ENCODE measurements at regions of chr2 and their contacts with region 1.

Region 1: GRCh38 chr2:25276569-25277465 is 64.9 kb downstream of the DNMT3A start:
- DNase-seq: peak; percentile 69 to 79 (median 73)
- H3K4me3 ChIP-seq: peak overlapping the region; percentile 26 to 53
- H3K4me3 Mint-ChIP-seq: peak overlapping the region; percentile 67 to 81 (median 76)
- H3K27ac ChIP-seq: peak overlapping the region; percentile 89
- H3K27ac Mint-ChIP-seq: peak overlapping the region; percentile 93 to 99 (median 96)
- H3K4me1 ChIP-seq: peaks cover 73% of the 10 kb centered on the region
- H3K4me1 Mint-ChIP-seq: peaks cover 37 to 78% (median 61%) of the 10 kb centered on the region in 4 donors
- H3K27me3 ChIP-seq: no peaks in the 10 kb centered on the region
- H3K27me3 Mint-ChIP-seq: no peaks in the 10 kb centered on the region

Region 2: DNA sequence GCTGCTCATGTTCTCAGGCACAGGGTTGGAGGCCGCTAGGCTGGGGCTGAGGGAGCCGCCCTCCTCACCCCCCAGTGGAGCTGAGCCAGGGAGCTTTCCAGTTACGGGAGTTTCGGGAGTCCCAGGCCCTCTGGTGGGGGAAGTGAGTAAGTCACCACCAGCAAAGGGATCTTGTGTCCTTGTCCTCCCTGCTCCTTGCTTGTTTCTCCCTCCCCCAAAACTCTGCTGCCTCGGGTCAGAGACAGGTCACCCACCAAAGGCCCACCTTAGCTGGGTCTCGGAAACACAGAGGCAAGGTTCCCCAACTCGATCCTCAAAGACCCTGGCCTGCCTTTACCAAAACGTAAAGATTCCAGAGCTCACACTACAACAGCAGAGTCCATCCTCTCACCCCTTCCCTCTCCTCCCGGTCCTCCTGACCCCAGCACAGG is 48.0 kb before region 1 on chr2:
- CTCF ChIA-PET with region 1: interaction called, 11 read pairs
- POLR2A ChIA-PET with region 1: interaction called, 4 read pairs
- intact Hi-C with region 1: no loop called
- DNase-seq: no peak
- H3K4me3 ChIP-seq: no peak overlapping the region
- H3K4me3 Mint-ChIP-seq: no peak overlapping the region
- H3K27ac ChIP-seq: no peak overlapping the region
- H3K27ac Mint-ChIP-seq: peak overlapping the region in 2 of 7 donors; percentile 14 to 75
- H3K4me1 ChIP-seq: peaks cover 4% of the 10 kb centered on the region
- H3K4me1 Mint-ChIP-seq: peaks cover 0 to 9% (median 1%) of the 10 kb centered on the region in 4 donors
- H3K27me3 ChIP-seq: no peaks in the 10 kb centered on the region
- H3K27me3 Mint-ChIP-seq: no peaks in the 10 kb centered on the region

Region 3: DNA sequence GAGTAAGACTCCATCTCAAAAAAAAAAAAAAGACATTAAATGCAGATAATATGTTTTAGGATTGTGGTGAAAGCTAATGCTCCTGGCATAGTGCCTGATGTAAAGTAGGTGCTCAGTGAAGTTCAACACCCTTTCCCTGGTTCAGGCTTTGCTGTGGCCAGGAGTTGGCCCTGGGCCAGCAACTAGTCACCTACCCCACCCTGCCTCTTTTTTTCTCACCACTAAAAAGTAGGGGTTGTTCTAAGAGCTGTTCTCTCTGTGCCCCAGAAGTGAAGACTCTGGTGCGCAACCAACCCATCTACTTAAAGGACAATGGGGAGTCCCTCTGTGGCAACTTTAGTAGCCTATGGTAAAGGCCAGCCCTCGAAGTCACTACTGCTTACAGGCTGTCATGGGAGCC is 11.0 kb before region 1 on chr2:
- CTCF ChIA-PET with region 1: interaction called, 24 read pairs
- POLR2A ChIA-PET with region 1: interaction called, 21 read pairs
- intact Hi-C with region 1: no loop called
- DNase-seq: peak in 3 of 5 donors; percentile 41 to 55 (median 52)
- H3K4me3 ChIP-seq: no peak overlapping the region
- H3K4me3 Mint-ChIP-seq: peak overlapping the region in 2 of 8 donors; percentile 26 to 51
- H3K27ac ChIP-seq: no peak overlapping the region
- H3K27ac Mint-ChIP-seq: peak overlapping the region in 6 of 7 donors; percentile 41 to 68 (median 58)
- H3K4me1 ChIP-seq: peaks cover 26% of the 10 kb centered on the region
- H3K4me1 Mint-ChIP-seq: peaks cover 27 to 49% (median 41%) of the 10 kb centered on the region in 4 donors
- H3K27me3 ChIP-seq: no peaks in the 10 kb centered on the region
- H3K27me3 Mint-ChIP-seq: no peaks in the 10 kb centered on the region

Region 4: GRCh38 chr2:25309402-25309801 is 32.6 kb after region 1 on chr2:
- CTCF ChIA-PET with region 1: interaction called, 26 read pairs
- POLR2A ChIA-PET with region 1: interaction called, 49 read pairs
- intact Hi-C with region 1: loop called (anchors 1 kb)
- DNase-seq: peak; percentile 53 to 60 (median 58)
- H3K4me3 ChIP-seq: no peak overlapping the region
- H3K4me3 Mint-ChIP-seq: no peak overlapping the region
- H3K27ac ChIP-seq: no peak overlapping the region
- H3K27ac Mint-ChIP-seq: peak overlapping the region in 6 of 7 donors; percentile 55 to 88 (median 75)
- H3K4me1 ChIP-seq: peaks cover 88% of the 10 kb centered on the region
- H3K4me1 Mint-ChIP-seq: peaks cover 33 to 90% (median 65%) of the 10 kb centered on the region in 4 donors
- H3K27me3 ChIP-seq: no peaks in the 10 kb centered on the region
- H3K27me3 Mint-ChIP-seq: no peaks in the 10 kb centered on the region

Region 5: GRCh38 chr2:25342372-25343186 is 65.8 kb after region 1 on chr2:
- CTCF ChIA-PET with region 1: interaction called, 8 read pairs
- POLR2A ChIA-PET with region 1: interaction called, 9 read pairs
- intact Hi-C with region 1: loop called (anchors 2 kb)
- DNase-seq: peak; percentile 78 to 83 (median 81)
- H3K4me3 ChIP-seq: peak overlapping the region in 1 of 2 donors; percentile 52
- H3K4me3 Mint-ChIP-seq: peak overlapping the region; percentile 66 to 89 (median 82)
- H3K27ac ChIP-seq: no peak overlapping the region
- H3K27ac Mint-ChIP-seq: peak overlapping the region in 3 of 7 donors; percentile 74 to 84 (median 74)
- H3K4me1 ChIP-seq: peaks cover 34% of the 10 kb centered on the region
- H3K4me1 Mint-ChIP-seq: peaks cover 10 to 35% (median 23%) of the 10 kb centered on the region in 4 donors
- H3K27me3 ChIP-seq: no peaks in the 10 kb centered on the region
- H3K27me3 Mint-ChIP-seq: no peaks in the 10 kb centered on the region

Region 6: DNA sequence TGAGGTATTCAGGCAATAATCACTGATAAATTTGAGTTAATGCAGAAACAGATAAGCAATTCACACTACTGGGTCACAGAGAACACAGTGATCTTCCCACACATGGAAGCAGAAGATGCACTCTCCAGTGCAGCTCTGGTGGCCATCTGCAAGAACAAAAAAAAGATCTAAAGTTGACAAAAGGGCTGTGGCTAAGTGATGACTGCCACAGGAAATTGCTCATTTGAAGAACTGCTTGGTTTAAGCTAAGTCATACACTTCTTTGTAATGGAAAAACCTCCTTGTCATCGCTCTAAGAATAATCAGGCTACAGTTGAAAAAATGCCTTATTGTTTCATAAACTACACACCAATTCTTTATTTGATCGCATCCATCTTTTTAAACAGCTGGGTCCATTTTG is 281.4 kb after region 1 on chr2:
- CTCF ChIA-PET with region 1: no interaction called
- POLR2A ChIA-PET with region 1: no interaction called
- intact Hi-C with region 1: no loop called
- DNase-seq: peak in 4 of 5 donors; percentile 7 to 26 (median 24)
- H3K4me3 ChIP-seq: no peak overlapping the region
- H3K4me3 Mint-ChIP-seq: peak overlapping the region in 2 of 8 donors; percentile 36 to 37
- H3K27ac ChIP-seq: no peak overlapping the region
- H3K27ac Mint-ChIP-seq: peak overlapping the region in 6 of 7 donors; percentile 4 to 70 (median 52)
- H3K4me1 ChIP-seq: peaks cover 15% of the 10 kb centered on the region
- H3K4me1 Mint-ChIP-seq: peaks cover 18 to 33% (median 30%) of the 10 kb centered on the region in 4 donors
- H3K27me3 ChIP-seq: no peaks in the 10 kb centered on the region
- H3K27me3 Mint-ChIP-seq: no peaks in the 10 kb centered on the region

Region 7: GRCh38 chr2:25878361-25879132 is 601.7 kb after region 1 on chr2 and contains the start of gene ASXL2:
- CTCF ChIA-PET with region 1: no interaction called
- POLR2A ChIA-PET with region 1: no interaction called
- intact Hi-C with region 1: loop called (anchors 5 kb)
- DNase-seq: peak; percentile 97 to 98 (median 97)
- H3K4me3 ChIP-seq: peak within 1 kb of the TSS; percentile 81 to 98
- H3K4me3 Mint-ChIP-seq: peak within 1 kb of the TSS; percentile 94 to 99 (median 97)
- H3K27ac ChIP-seq: peak within 1 kb of the TSS; percentile 98
- H3K27ac Mint-ChIP-seq: peak within 1 kb of the TSS; percentile 94 to 99 (median 99)
- H3K4me1 ChIP-seq: peaks cover 39% of the 10 kb centered on the region
- H3K4me1 Mint-ChIP-seq: peaks cover 27 to 47% (median 35%) of the 10 kb centered on the region in 4 donors
- H3K27me3 ChIP-seq: no peaks in the 10 kb centered on the region
- H3K27me3 Mint-ChIP-seq: no peaks in the 10 kb centered on the region
- total RNA-seq, gene ASXL2: 56.0 to 63.6 TPM

Measured in CD4-positive, alpha-beta memory T cell (primary cell).